Calu3 (cell line): ENCODE measurements at regions of chr3 and their contacts with region 1.

Region 1: GRCh38 chr3:192816351-192816750 is 89.0 kb upstream of the FGF12 start:
- DNase-seq: peak; percentile 50
- H3K4me3 Mint-ChIP-seq: no peak overlapping the region
- H3K27ac Mint-ChIP-seq: no peak overlapping the region
- H3K4me1 Mint-ChIP-seq: peaks cover 37% of the 10 kb centered on the region
- H3K27me3 Mint-ChIP-seq: no peaks in the 10 kb centered on the region
- CTCF ChIP-seq: peak; percentile 92

Region 2: GRCh38 chr3:192851821-192852424 is 35.6 kb after region 1 on chr3:
- CTCF ChIA-PET with region 1: interaction called, 3 read pairs
- intact Hi-C with region 1: loop called (anchors 1 kb)
- DNase-seq: peak; percentile 97
- H3K4me3 Mint-ChIP-seq: peak overlapping the region; percentile 35
- H3K27ac Mint-ChIP-seq: peak overlapping the region; percentile 56
- H3K4me1 Mint-ChIP-seq: peaks cover 38% of the 10 kb centered on the region
- H3K27me3 Mint-ChIP-seq: no peaks in the 10 kb centered on the region
- CTCF ChIP-seq: no peak

Region 3: GRCh38 chr3:192917404-192918274 is 101.3 kb after region 1 on chr3 and contains the start of gene MB21D2:
- CTCF ChIA-PET with region 1: interaction called, 11 read pairs
- intact Hi-C with region 1: loop called (anchors 1 kb)
- DNase-seq: peak; percentile 87
- H3K4me3 Mint-ChIP-seq: peak within 1 kb of the TSS; percentile 93
- H3K27ac Mint-ChIP-seq: peak within 1 kb of the TSS; percentile 65
- H3K4me1 Mint-ChIP-seq: peaks cover 52% of the 10 kb centered on the region
- H3K27me3 Mint-ChIP-seq: no peaks in the 10 kb centered on the region
- CTCF ChIP-seq: no peak
- total RNA-seq, gene MB21D2: 11.9 and 12.6 TPM in 2 replicates

Region 4: GRCh38 chr3:193129601-193130000 is 313.2 kb after region 1 on chr3:
- CTCF ChIA-PET with region 1: interaction called, 14 read pairs
- intact Hi-C with region 1: loop called (anchors 1 kb)
- DNase-seq: peak; percentile 53
- H3K4me3 Mint-ChIP-seq: no peak overlapping the region
- H3K27ac Mint-ChIP-seq: no peak overlapping the region
- H3K4me1 Mint-ChIP-seq: peaks cover under 1% of the 10 kb centered on the region
- H3K27me3 Mint-ChIP-seq: peaks cover 28% of the 10 kb centered on the region
- CTCF ChIP-seq: no peak

Region 5: DNA sequence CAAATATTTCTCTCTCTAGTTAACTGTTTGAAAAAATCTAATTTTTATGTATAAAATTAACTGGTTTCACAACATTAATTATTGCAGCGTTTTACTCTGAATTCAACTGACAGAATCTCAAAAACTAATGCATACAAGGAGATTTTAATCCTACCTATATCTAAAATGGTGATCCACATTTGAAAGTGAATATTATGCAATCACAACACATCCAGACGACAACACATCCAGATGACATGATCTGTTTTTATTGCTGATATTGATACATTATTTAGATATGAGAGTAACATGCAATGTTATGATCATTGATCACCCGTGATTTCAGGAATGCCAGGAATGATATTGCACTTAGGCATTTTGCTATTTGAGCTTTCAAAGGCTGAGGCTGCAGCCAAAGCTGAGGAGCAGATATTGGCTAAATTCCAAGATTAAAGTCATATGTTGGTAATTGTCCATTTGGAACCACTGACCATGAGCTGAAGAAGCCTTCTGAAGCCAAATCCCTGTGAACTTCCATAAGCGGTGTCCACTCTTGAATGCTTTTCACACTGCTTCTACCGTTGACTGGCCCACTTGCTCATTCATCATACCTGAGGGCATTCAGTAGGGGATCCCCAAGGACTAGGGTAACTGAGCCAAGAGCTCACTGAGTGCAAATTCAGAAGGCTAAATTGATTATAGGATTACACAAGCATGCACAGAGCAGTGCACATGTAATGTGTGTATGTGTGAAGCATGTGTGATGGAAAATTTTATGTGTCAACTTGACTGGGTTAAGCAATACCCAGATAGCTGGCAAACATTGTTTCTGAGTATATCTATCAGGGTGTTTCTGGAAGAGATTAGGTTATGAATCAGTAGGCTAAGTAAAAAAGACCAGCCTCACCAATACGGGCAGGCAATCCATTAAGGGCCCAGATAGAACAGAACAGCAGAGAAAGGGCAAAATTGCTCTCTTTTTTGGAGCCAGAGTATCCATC is 332.4 kb after region 1 on chr3:
- CTCF ChIA-PET with region 1: no interaction called
- intact Hi-C with region 1: no loop called
- DNase-seq: no peak
- H3K4me3 Mint-ChIP-seq: no peak overlapping the region
- H3K27ac Mint-ChIP-seq: no peak overlapping the region
- H3K4me1 Mint-ChIP-seq: no peaks in the 10 kb centered on the region
- H3K27me3 Mint-ChIP-seq: peaks cover 13% of the 10 kb centered on the region
- CTCF ChIP-seq: no peak

Region 6: GRCh38 chr3:193465992-193466608 is 649.7 kb after region 1 on chr3:
- CTCF ChIA-PET with region 1: interaction called, 5 read pairs
- intact Hi-C with region 1: loop called (anchors 1 kb)
- DNase-seq: no peak
- H3K4me3 Mint-ChIP-seq: no peak overlapping the region
- H3K27ac Mint-ChIP-seq: no peak overlapping the region
- H3K4me1 Mint-ChIP-seq: peaks cover 9% of the 10 kb centered on the region
- H3K27me3 Mint-ChIP-seq: no peaks in the 10 kb centered on the region
- CTCF ChIP-seq: no peak